ENCODE measurements at regions of chr3 and their contacts with region 1.

Region 1: DNA sequence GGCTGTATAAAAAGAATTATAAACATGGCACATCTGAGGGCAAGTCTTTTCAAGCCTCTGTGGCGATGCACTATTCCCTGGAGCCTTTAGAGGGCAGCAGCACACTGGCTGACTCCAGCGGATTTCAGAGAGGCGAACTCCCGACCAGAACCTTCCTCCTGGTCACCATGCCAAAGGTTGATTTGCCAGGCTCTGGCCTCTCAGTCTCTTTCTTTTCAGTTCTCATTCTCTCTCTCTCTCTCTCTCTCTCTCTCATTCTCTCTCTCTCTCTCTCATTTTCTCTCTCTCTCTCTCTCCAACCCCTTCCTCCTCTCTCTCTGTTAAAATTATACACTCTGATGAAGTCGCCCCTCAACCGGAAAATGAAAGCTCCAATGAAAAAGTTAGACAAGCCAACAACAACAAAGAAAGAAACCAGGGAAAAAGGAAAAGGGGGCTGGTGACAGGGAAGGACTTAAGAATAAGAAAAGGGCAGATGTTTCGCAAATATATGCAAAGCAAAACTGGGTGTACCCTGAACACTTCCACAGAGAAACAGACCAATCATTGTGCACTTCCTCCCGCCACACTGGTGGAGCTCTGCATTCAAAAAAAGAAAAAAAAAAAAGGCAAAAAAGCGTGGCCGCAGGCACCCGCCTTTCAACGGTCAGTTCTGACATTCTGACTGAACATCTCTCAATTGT is 90.2 kb downstream of the TIGIT start:
- DNase-seq: peak; percentile 82
- ATAC-seq: peak; percentile 87 to 88

Region 2: DNA sequence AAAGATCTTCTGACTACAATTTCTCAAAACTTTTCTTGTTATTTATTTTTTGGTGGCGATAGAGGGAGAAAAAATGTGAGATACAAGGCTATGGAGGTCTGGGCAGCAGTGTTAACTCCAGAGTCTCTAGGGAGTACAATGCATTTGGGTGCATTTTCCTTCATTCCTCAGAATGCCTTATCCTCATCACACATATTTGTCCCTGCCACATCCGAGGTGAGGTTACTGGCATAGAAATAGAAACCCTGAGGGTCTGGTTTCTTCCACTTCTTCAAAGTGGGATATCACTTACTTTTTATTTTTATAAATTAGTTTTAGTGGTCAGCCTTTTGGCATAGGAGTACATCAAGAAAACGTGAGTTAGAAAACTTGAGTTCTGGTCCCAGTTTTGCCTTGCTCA is 60.2 kb after region 1 on chr3:
- intact Hi-C with region 1: no loop called
- DNase-seq: no peak
- ATAC-seq: no peak

Region 3: DNA sequence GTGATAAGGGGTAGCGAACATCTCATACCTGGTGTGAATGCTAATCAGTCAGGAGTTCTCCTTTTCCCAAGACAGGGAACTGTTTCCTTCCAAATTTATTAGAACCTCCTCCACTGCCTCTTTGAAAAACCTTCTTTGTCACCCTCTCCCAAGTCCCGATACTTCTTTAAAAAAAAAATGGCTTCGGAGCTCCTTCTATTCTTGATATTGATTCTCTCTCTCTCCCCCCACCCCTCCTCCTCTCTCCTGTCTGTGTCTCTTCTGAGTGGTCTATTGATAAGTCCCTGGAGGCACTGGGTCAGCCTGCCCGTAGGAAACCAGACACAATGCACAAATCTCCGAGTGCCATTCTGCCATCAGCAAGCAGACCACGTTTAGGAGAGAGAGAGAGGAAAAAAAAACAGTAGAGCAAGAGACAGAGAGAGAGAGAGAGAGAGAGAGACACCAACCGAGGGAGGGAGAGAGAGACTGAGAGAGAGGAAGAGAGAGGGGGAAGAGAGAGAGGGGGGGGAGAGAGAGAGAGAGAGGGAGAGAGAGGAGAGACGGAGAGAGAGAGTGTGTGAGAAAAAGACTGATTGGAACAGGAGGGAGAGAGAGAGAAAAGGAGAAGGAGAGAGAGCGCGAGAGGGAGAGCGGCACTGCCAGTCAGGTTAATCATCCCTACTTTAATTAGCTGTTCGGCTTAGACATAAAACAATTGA is 70.7 kb after region 1 on chr3:
- intact Hi-C with region 1: loop called in 1 of 2 experiments (anchors 5 kb)
- DNase-seq: no peak
- ATAC-seq: peak; percentile 50 to 58

Region 4: DNA sequence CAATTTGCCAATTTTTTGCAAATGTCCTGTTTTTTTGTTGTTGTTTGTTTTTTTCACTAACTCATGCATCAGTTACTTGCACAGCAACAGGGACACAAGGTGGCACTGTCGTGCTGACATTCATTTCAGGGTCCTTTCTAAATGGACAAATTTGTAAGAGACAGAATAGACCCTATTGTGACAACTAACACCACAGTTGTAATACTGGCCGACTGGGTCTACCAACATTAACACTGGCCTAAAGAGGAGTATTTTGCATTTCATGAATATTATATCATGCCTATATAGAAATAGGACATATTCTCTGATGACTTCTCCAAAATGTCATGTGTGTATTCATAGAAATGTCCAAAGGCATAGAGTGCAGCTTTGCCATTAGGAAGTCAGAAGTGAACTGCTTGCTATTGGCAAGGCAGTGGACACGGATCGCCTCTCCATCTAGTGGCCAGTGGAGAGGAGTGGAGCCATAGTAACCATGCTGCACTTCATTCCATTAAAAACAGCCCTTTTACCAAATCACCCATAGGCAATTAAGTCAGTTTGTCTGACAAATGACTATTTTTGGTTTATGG is 708.3 kb after region 1 on chr3:
- intact Hi-C with region 1: loop called in 1 of 2 experiments (anchors 5 kb)
- DNase-seq: peak; percentile 61
- ATAC-seq: peak; percentile 97 to 99

Measured in left cardiac atrium (tissue), 4 donors.